ENCODE measurements at regions of chr1 and their contacts with region 1.

Region 1: GRCh38 chr1:203769505-203770343 is 4.7 kb downstream of the LAX1 start:
- DNase-seq: no peak
- ATAC-seq: peak; percentile 52
- H3K4me3 ChIP-seq: no peak overlapping the region
- H3K4me3 Mint-ChIP-seq: peak overlapping the region in 7 of 10 donors; percentile 13 to 96 (median 52)
- H3K27ac ChIP-seq: no peak overlapping the region
- H3K27ac Mint-ChIP-seq: peak overlapping the region; percentile 68 to 99 (median 90)
- H3K4me1 ChIP-seq: peaks cover 21% of the 10 kb centered on the region in 2 donors
- H3K4me1 Mint-ChIP-seq: peaks cover 25 to 64% (median 35%) of the 10 kb centered on the region in 7 donors
- H3K27me3 ChIP-seq: no peaks in the 10 kb centered on the region
- H3K27me3 Mint-ChIP-seq: no peaks in the 10 kb centered on the region

Region 2: GRCh38 chr1:203290261-203291089 is 479.2 kb before region 1 on chr1:
- CTCF ChIA-PET with region 1: no interaction called
- POLR2A ChIA-PET with region 1: no interaction called
- intact Hi-C with region 1: loop called in 1 of 2 experiments (anchors 2 kb)
- DNase-seq: peak; percentile 95 to 98 (median 97)
- ATAC-seq: peak; percentile 76
- H3K4me3 ChIP-seq: peak overlapping the region; percentile 57
- H3K4me3 Mint-ChIP-seq: peak overlapping the region; percentile 75 to 89 (median 86)
- H3K27ac ChIP-seq: peak overlapping the region; percentile 98
- H3K27ac Mint-ChIP-seq: peak overlapping the region; percentile 97 to 100 (median 99)
- H3K4me1 ChIP-seq: peaks cover 54 to 58% of the 10 kb centered on the region in 2 donors
- H3K4me1 Mint-ChIP-seq: peaks cover 44 to 92% (median 86%) of the 10 kb centered on the region in 7 donors
- H3K27me3 ChIP-seq: no peaks in the 10 kb centered on the region
- H3K27me3 Mint-ChIP-seq: peaks cover 0 to 3% (median 0%) of the 10 kb centered on the region in 5 donors

Region 3: DNA sequence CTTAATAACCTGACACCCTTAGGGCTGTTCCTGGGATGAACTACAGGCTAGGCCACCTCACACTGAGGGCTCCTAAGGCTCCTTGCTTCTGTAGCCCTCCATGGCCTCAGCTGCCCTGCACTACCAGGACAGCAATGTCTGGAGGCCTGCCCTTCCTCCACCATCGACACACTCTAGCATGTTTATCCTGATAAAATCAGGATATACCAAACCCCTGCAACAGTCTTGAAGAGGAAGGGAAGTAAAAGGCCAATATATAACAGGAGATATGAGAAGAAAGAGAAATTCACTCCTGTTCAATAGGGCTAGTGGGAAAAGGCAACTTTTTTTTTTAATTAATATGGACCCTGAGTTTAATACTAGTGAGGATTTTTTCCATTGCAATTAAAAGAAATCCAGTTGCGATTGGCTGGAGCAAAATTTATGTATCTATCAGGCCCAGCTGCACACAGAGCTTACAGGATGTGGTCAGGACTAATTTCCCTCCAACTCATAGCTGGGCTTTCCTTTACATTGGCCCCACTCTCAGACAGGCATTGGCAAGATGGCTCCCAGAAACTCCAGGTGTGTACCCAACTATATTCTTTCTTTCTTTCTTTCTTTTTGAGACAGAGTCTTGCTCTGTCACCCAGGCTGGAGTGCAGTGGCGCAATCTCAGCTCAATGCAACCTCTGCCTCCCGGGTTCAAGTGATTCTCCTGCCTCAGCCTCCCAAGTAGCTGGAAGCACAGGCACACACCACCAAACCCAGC is 156.6 kb before region 1 on chr1:
- CTCF ChIA-PET with region 1: no interaction called
- POLR2A ChIA-PET with region 1: no interaction called
- intact Hi-C with region 1: loop called in 1 of 2 experiments (anchors 5 kb)
- DNase-seq: no peak
- ATAC-seq: no peak
- H3K4me3 ChIP-seq: no peak overlapping the region
- H3K4me3 Mint-ChIP-seq: peak overlapping the region in 1 of 10 donors; percentile 49
- H3K27ac ChIP-seq: no peak overlapping the region
- H3K27ac Mint-ChIP-seq: peak overlapping the region in 2 of 9 donors; percentile 58 to 76
- H3K4me1 ChIP-seq: peaks cover 0 to 6% of the 10 kb centered on the region in 2 donors
- H3K4me1 Mint-ChIP-seq: peaks cover 12 to 68% (median 18%) of the 10 kb centered on the region in 7 donors
- H3K27me3 ChIP-seq: no peaks in the 10 kb centered on the region
- H3K27me3 Mint-ChIP-seq: no peaks in the 10 kb centered on the region

Region 4: DNA sequence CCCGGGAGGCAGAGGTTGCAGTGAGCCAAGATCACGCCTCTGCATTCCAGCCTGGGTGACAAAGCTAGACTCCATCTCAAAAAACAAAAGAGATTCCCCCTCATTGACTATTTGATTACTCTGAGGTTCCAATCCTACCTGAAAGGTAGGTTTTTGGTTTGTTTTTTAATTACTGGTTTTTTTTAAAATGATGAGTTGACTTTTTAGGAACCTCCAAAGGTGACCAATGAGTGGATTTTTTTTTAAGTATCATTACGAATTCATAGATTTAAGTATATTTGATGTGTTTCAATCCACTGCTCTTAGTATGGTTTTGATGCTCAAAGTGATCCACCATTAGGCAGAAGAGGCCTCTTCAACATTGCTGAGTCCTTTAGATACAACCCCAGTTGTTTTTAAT is 52.6 kb before region 1 on chr1:
- CTCF ChIA-PET with region 1: no interaction called
- POLR2A ChIA-PET with region 1: interaction called, 3 read pairs
- intact Hi-C with region 1: loop called in 1 of 2 experiments (anchors 5 kb)
- DNase-seq: no peak
- ATAC-seq: no peak
- H3K4me3 ChIP-seq: no peak overlapping the region
- H3K4me3 Mint-ChIP-seq: no peak overlapping the region
- H3K27ac ChIP-seq: no peak overlapping the region
- H3K27ac Mint-ChIP-seq: no peak overlapping the region
- H3K4me1 ChIP-seq: no peaks in the 10 kb centered on the region
- H3K4me1 Mint-ChIP-seq: peaks cover 0 to 1% (median 0%) of the 10 kb centered on the region in 7 donors
- H3K27me3 ChIP-seq: no peaks in the 10 kb centered on the region
- H3K27me3 Mint-ChIP-seq: no peaks in the 10 kb centered on the region

Region 5: GRCh38 chr1:203754455-203754864 is 15.3 kb before region 1 on chr1:
- CTCF ChIA-PET with region 1: interaction called, 3 read pairs
- POLR2A ChIA-PET with region 1: interaction called, 16 read pairs
- intact Hi-C with region 1: loop called (anchors 1 kb)
- DNase-seq: peak in 6 of 9 donors; percentile 16 to 34 (median 26)
- ATAC-seq: peak; percentile 54
- H3K4me3 ChIP-seq: no peak overlapping the region
- H3K4me3 Mint-ChIP-seq: peak overlapping the region; percentile 18 to 76 (median 62)
- H3K27ac ChIP-seq: peak overlapping the region; percentile 60
- H3K27ac Mint-ChIP-seq: peak overlapping the region; percentile 72 to 94 (median 88)
- H3K4me1 ChIP-seq: peaks cover 13 to 21% of the 10 kb centered on the region in 2 donors
- H3K4me1 Mint-ChIP-seq: peaks cover 18 to 38% (median 28%) of the 10 kb centered on the region in 7 donors
- H3K27me3 ChIP-seq: no peaks in the 10 kb centered on the region
- H3K27me3 Mint-ChIP-seq: no peaks in the 10 kb centered on the region

Region 6: DNA sequence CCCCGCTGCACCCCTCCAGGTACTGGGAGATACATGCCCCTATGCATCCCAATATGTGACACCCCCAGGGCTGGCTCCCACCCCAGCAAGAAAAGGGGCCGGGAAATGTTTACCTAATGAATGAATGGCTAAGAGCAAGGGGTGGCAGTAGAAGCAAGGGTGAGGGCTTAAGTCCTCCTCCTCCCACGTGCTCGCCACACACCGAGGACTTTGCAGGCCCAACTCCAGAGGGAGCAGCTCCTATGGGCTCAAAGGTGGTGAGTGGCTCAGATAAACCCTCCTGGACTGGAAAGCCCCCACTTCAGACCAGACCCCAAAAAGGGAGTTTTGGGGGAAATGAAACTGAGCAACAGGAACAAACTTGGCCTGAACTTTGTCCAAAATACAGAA is 1899.2 kb after region 1 on chr1:
- CTCF ChIA-PET with region 1: no interaction called
- POLR2A ChIA-PET with region 1: no interaction called
- intact Hi-C with region 1: no loop called
- DNase-seq: no peak
- ATAC-seq: peak; percentile 42
- H3K4me3 ChIP-seq: no peak overlapping the region
- H3K4me3 Mint-ChIP-seq: no peak overlapping the region
- H3K27ac ChIP-seq: no peak overlapping the region
- H3K27ac Mint-ChIP-seq: no peak overlapping the region
- H3K4me1 ChIP-seq: no peaks in the 10 kb centered on the region
- H3K4me1 Mint-ChIP-seq: peaks cover 0 to 2% (median 0%) of the 10 kb centered on the region in 7 donors
- H3K27me3 ChIP-seq: no peaks in the 10 kb centered on the region
- H3K27me3 Mint-ChIP-seq: peaks cover 0 to 18% (median 8%) of the 10 kb centered on the region in 5 donors